Heart left ventricle (tissue), 16 donors: ENCODE measurements at regions of chr4 and their contacts with region 1.

Region 1: GRCh38 chr4:56435306-56435926 is at the start of gene PPAT:
- DNase-seq: peak; percentile 97 to 99 (median 98)
- ATAC-seq: peak; percentile 95 to 98 (median 97)
- H3K4me3 ChIP-seq: peak within 1 kb of the TSS; percentile 55 to 85 (median 74)
- H3K27ac ChIP-seq: peak within 1 kb of the TSS; percentile 66 to 99 (median 93)
- H3K4me1 ChIP-seq: peaks cover 0 to 22% (median 14%) of the 10 kb centered on the region in 12 donors
- H3K27me3 ChIP-seq: no peaks in the 10 kb centered on the region
- CTCF ChIP-seq: peak in 11 of 12 donors; percentile 23 to 66 (median 40)
- POLR2A ChIP-seq: peak in 1 of 2 donors; percentile 43
- total RNA-seq, gene PPAT: 2.1 to 6.5 (median 3.7) TPM

Region 2: DNA sequence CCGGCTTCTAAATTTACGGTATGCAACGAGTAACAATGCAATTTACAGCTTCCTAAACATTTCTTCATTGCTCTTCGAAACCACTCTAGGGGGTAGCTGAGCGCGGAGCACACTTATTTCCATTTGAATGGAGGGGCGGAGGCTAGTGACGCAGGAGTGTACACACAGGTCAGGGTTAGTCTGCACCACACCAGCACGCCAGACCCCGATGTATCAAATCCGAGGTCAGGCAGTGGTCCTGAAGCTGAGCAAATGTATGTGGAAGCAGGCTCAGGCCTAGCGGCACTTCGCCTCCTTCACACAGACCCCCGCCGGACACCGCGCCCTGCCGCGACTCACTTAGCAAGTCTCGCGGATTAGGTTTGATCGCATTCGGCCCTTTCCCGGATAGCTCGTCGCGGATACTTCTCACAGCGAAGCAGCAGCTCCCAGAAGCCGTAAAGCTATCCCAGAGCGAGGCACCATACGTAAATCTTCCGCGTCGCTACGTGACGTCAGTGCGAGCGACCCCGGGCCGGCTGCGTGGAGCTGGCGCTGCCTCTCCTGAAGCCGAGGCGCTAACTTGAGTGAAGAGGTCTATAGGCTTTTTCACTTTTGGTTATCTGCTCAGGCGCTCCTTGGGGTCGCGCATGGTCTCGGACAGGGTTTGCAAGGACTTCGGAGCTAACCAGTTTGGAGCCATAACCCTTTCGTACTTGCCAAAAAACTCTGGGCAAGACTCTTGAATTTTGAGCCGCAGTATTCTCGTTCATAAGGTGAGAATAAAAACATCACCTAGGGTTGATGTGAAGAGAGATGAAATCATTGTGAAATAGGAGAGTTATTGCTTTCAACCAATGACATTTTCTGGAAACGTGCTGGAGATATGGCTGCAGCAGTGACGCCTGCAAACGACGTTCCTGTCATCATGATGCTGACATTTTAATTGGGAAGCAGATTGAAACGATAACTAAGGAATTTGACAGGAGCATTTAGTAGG is 48.1 kb before region 1 on chr4 and contains the start of gene AASDH:
- intact Hi-C with region 1: loop called in 3 of 10 experiments (anchors 2 to 5 kb)
- DNase-seq: peak; percentile 91 to 95 (median 94)
- ATAC-seq: peak; percentile 97 to 98 (median 98)
- H3K4me3 ChIP-seq: peak within 1 kb of the TSS; percentile 51 to 90 (median 78)
- H3K27ac ChIP-seq: peak within 1 kb of the TSS; percentile 85 to 99 (median 96)
- H3K4me1 ChIP-seq: peaks cover 0 to 26% (median 15%) of the 10 kb centered on the region in 12 donors
- H3K27me3 ChIP-seq: no peaks in the 10 kb centered on the region
- CTCF ChIP-seq: no peak
- POLR2A ChIP-seq: peak in 1 of 2 donors; percentile 74
- total RNA-seq, gene AASDH: 3.1 to 11.7 (median 5.3) TPM

Region 3: DNA sequence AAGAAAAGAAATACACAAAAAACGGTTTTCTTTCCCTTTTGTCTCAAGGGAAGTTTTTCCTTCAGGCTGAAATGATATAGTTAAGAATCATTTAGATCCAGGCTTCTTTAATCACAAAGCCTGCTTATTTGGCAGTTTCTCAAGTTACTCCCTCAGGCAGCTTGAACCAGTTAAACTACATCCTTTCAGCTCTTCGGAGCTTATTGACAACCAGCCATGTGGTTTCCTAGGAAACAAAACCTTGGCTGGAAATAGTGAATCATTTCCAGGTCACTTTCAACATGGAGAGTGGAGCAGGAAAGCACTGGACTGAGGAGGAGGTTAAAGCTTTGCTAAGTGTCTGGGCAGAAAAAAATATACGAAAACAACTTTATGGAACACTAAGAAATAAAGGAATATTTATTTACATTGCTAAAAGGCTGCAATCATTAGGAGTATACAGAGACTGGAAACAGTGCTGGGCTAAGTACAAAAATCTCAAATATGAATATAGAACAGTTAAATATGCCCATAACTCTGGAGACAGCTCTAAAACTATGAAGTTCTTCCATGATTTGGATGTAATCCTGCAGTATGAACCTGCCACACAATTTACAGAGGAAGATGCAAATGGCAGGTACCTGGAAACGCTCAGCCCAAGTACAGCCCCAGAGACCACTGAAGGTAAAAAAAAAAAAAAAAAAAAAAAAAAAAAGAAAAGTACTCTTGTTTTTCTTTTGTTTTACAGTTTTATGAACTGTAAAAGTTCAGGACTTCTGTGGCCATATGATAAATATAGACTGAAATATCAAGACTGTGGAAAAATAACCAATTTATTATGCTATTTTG is 25.0 kb before region 1 on chr4:
- intact Hi-C with region 1: loop called in 1 of 10 experiments (anchors 2 kb)
- DNase-seq: peak in 2 of 5 donors; percentile 59 to 71
- ATAC-seq: peak; percentile 81 to 98 (median 96)
- H3K4me3 ChIP-seq: peak overlapping the region in 11 of 12 donors; percentile 14 to 48 (median 36)
- H3K27ac ChIP-seq: peak overlapping the region in 9 of 12 donors; percentile 3 to 71 (median 35)
- H3K4me1 ChIP-seq: peaks cover 0 to 20% (median 7%) of the 10 kb centered on the region in 12 donors
- H3K27me3 ChIP-seq: no peaks in the 10 kb centered on the region
- CTCF ChIP-seq: no peak
- POLR2A ChIP-seq: no peak

Region 4: GRCh38 chr4:56467284-56468096 is 32.1 kb after region 1 on chr4 and contains the start of gene SRP72:
- intact Hi-C with region 1: loop called in 3 of 10 experiments (anchors 1 to 2 kb)
- DNase-seq: peak; percentile 89 to 92 (median 91)
- ATAC-seq: peak; percentile 97 to 99 (median 98)
- H3K4me3 ChIP-seq: peak within 1 kb of the TSS; percentile 66 to 97 (median 90)
- H3K27ac ChIP-seq: peak within 1 kb of the TSS; percentile 74 to 92 (median 87)
- H3K4me1 ChIP-seq: peaks cover 3 to 54% (median 35%) of the 10 kb centered on the region in 12 donors
- H3K27me3 ChIP-seq: no peaks in the 10 kb centered on the region
- CTCF ChIP-seq: peak in 1 of 12 donors; percentile 14
- POLR2A ChIP-seq: peak in 1 of 2 donors; percentile 51
- total RNA-seq, gene SRP72: 35.1 to 66.8 (median 41.7) TPM

Region 5: GRCh38 chr4:56535915-56536314 is 100.5 kb after region 1 on chr4:
- intact Hi-C with region 1: loop called in 1 of 10 experiments (anchors 5 kb)
- DNase-seq: no peak
- ATAC-seq: no peak
- H3K4me3 ChIP-seq: no peak overlapping the region
- H3K27ac ChIP-seq: no peak overlapping the region
- H3K4me1 ChIP-seq: peaks cover 0 to 8% (median 4%) of the 10 kb centered on the region in 12 donors
- H3K27me3 ChIP-seq: peaks cover 0 to 14% (median 0%) of the 10 kb centered on the region in 9 donors
- CTCF ChIP-seq: no peak
- POLR2A ChIP-seq: no peak